ENCODE measurements at regions of chrX and their contacts with region 1.

Region 1: DNA sequence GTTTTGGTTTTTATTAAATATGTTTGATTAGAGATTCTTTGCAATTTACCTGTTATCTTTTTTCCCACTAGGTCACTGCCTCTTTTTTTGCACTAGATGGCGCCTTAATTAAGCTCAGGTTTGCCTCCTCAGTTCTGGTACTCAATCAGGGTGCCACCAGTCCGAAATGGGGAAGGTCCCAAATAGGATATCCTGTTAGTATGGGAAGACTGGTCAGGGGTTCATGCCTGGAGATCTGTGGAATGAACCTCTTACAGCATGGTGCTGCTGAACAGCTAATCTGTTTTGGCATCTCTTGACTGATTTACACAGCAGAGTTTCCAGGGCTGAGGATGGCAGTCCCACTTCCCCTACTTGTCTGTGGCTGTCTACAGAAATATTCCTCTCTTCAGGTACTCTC is 24.2 kb upstream of the VSIG1 start:
- DNase-seq: peak in 7 of 9 donors; percentile 10 to 41 (median 29)
- ATAC-seq: no peak
- H3K4me3 ChIP-seq: peak overlapping the region; percentile 24
- H3K4me3 Mint-ChIP-seq: peak overlapping the region; percentile 73 to 95 (median 88)
- H3K27ac ChIP-seq: peak overlapping the region; percentile 82
- H3K27ac Mint-ChIP-seq: peak overlapping the region in 8 of 9 donors; percentile 88 to 97 (median 96)
- H3K4me1 ChIP-seq: peaks cover 26 to 38% of the 10 kb centered on the region in 2 donors
- H3K4me1 Mint-ChIP-seq: peaks cover 21 to 88% (median 79%) of the 10 kb centered on the region in 7 donors
- H3K27me3 ChIP-seq: no peaks in the 10 kb centered on the region
- H3K27me3 Mint-ChIP-seq: no peaks in the 10 kb centered on the region

Region 2: GRCh38 chrX:107741404-107741790 is 279.2 kb before region 1 on chrX:
- CTCF ChIA-PET with region 1: no interaction called
- POLR2A ChIA-PET with region 1: interaction called, 3 read pairs
- intact Hi-C with region 1: loop called in 1 of 2 experiments (anchors 1 kb)
- DNase-seq: peak in 1 of 9 donors; percentile 10
- ATAC-seq: no peak
- H3K4me3 ChIP-seq: peak overlapping the region; percentile 45
- H3K4me3 Mint-ChIP-seq: peak overlapping the region; percentile 80 to 96 (median 85)
- H3K27ac ChIP-seq: peak overlapping the region; percentile 72
- H3K27ac Mint-ChIP-seq: peak overlapping the region; percentile 94 to 100 (median 99)
- H3K4me1 ChIP-seq: peaks cover 26 to 45% of the 10 kb centered on the region in 2 donors
- H3K4me1 Mint-ChIP-seq: peaks cover 15 to 70% (median 45%) of the 10 kb centered on the region in 7 donors
- H3K27me3 ChIP-seq: no peaks in the 10 kb centered on the region
- H3K27me3 Mint-ChIP-seq: peaks cover 0 to 7% (median 0%) of the 10 kb centered on the region in 5 donors

Region 3: DNA sequence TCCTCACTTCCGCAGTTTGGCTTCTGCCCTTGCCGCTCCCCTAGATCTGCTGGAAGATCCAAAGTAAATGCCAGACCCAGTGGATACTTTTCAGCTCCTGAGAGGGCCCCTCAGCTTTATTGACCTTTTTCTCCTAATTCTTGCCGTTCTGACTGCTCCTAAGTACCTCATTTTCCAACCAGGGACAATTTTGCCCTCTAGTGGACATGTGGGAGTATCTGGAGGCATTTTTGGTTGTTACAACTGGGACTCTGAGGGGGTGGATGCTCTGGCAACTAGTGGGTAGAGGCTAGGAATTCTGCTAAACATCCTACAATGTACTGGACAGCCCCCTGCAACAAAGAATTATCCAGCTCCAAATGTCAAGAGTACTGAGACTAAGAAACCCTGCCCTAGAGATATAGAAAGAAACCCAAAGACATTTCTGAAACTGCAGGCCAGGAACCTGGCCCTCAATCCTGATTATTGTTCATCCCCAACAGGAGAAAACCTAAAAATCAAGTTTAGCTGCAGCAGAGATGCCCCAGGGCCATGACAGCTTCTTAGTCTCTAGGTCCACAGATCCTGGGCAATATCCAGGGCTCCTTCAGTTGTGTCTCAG is 41.8 kb before region 1 on chrX:
- CTCF ChIA-PET with region 1: no interaction called
- POLR2A ChIA-PET with region 1: no interaction called
- intact Hi-C with region 1: loop called in 1 of 2 experiments (anchors 2 kb)
- DNase-seq: peak in 2 of 9 donors; percentile 3 to 6
- ATAC-seq: no peak
- H3K4me3 ChIP-seq: no peak overlapping the region
- H3K4me3 Mint-ChIP-seq: no peak overlapping the region
- H3K27ac ChIP-seq: no peak overlapping the region
- H3K27ac Mint-ChIP-seq: no peak overlapping the region
- H3K4me1 ChIP-seq: no peaks in the 10 kb centered on the region
- H3K4me1 Mint-ChIP-seq: peaks cover 0 to 15% (median 6%) of the 10 kb centered on the region in 7 donors
- H3K27me3 ChIP-seq: no peaks in the 10 kb centered on the region
- H3K27me3 Mint-ChIP-seq: peaks cover 0 to 2% (median 0%) of the 10 kb centered on the region in 5 donors

Region 4: GRCh38 chrX:108001174-108001814 is 19.3 kb before region 1 on chrX:
- CTCF ChIA-PET with region 1: interaction called, 5 read pairs
- POLR2A ChIA-PET with region 1: interaction called, 8 read pairs
- intact Hi-C with region 1: loop called in 1 of 2 experiments (anchors 1 kb)
- DNase-seq: peak in 7 of 9 donors; percentile 36 to 63 (median 49)
- ATAC-seq: peak; percentile 88
- H3K4me3 ChIP-seq: no peak overlapping the region
- H3K4me3 Mint-ChIP-seq: peak overlapping the region in 4 of 10 donors; percentile 8 to 38 (median 29)
- H3K27ac ChIP-seq: no peak overlapping the region
- H3K27ac Mint-ChIP-seq: peak overlapping the region in 4 of 9 donors; percentile 0 to 77 (median 44)
- H3K4me1 ChIP-seq: no peaks in the 10 kb centered on the region
- H3K4me1 Mint-ChIP-seq: peaks cover 0 to 8% (median 6%) of the 10 kb centered on the region in 7 donors
- H3K27me3 ChIP-seq: no peaks in the 10 kb centered on the region
- H3K27me3 Mint-ChIP-seq: peaks cover 0 to 16% (median 0%) of the 10 kb centered on the region in 5 donors

Region 5: DNA sequence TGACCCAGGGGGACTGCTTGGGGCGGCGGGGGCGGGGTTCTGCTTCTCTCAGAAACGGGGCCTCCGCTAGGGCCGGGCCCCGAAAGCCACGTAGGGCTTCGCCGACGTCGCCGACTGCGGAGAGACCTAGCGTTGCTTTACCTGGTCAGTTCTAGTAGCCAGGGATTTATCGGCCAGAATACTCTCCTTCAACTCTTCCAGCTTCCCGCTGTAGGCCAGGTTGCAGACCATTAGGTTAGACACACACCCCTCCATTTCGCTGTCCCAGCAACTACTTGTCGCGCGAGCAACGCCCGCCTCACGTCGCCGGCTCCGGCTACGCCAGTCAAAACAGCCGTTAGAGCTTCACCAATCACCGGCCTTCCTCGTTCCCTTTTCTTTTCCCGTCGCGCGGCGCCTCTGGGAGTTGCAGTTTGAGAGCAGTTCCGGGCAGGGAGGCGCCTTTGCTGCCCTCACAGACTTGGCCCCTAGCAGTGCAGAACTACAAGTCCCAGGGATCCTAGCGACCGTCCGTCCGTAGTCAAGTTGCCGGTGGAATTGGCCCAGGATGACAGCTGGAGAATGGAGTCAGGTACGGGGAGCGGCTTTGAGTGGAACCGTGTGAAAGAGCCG is 70.7 kb after region 1 on chrX and contains the starts of genes ATG4A and PSMD10:
- CTCF ChIA-PET with region 1: interaction called, 4 read pairs
- POLR2A ChIA-PET with region 1: no interaction called
- intact Hi-C with region 1: loop called (anchors 1 to 5 kb)
- DNase-seq: peak; percentile 65 to 91 (median 85)
- ATAC-seq: peak; percentile 97
- H3K4me3 ChIP-seq: peak within 1 kb of the TSS; percentile 85
- H3K4me3 Mint-ChIP-seq: no peak within 1 kb of the TSS
- H3K27ac ChIP-seq: peak within 1 kb of the TSS; percentile 88
- H3K27ac Mint-ChIP-seq: no peak within 1 kb of the TSS
- H3K4me1 ChIP-seq: no peaks in the 10 kb centered on the region
- H3K4me1 Mint-ChIP-seq: peaks cover 0 to 28% (median 15%) of the 10 kb centered on the region in 7 donors
- H3K27me3 ChIP-seq: no peaks in the 10 kb centered on the region
- H3K27me3 Mint-ChIP-seq: no peaks in the 10 kb centered on the region
- total RNA-seq, gene ATG4A: 6.7 to 11.4 (median 7.5) TPM
- total RNA-seq, gene PSMD10: 17.6 to 36.8 (median 22.1) TPM

Region 6: GRCh38 chrX:109536439-109537336 is 1516.1 kb after region 1 on chrX and contains the start of gene NXT2:
- CTCF ChIA-PET with region 1: no interaction called
- POLR2A ChIA-PET with region 1: no interaction called
- intact Hi-C with region 1: loop called in 1 of 2 experiments (anchors 5 kb)
- DNase-seq: peak; percentile 64 to 89 (median 83)
- ATAC-seq: peak; percentile 100
- H3K4me3 ChIP-seq: peak within 1 kb of the TSS; percentile 87
- H3K4me3 Mint-ChIP-seq: peak within 1 kb of the TSS; percentile 79 to 98 (median 95)
- H3K27ac ChIP-seq: peak within 1 kb of the TSS; percentile 87
- H3K27ac Mint-ChIP-seq: peak within 1 kb of the TSS; percentile 92 to 99 (median 98)
- H3K4me1 ChIP-seq: peaks cover 0 to 3% of the 10 kb centered on the region in 2 donors
- H3K4me1 Mint-ChIP-seq: peaks cover 0 to 14% (median 8%) of the 10 kb centered on the region in 7 donors
- H3K27me3 ChIP-seq: no peaks in the 10 kb centered on the region
- H3K27me3 Mint-ChIP-seq: peaks cover 0 to 19% (median 12%) of the 10 kb centered on the region in 5 donors
- total RNA-seq, gene NXT2: 5.7 to 13.5 (median 7.7) TPM